Activated CD4-positive, alpha-beta T cell treated with anti-CD3 and anti-CD28 coated beads for 36 hours (primary cell): ENCODE measurements at regions of chr2 and their contacts with region 1.

Region 1: GRCh38 chr2:24075915-24076848 is at the start of gene SF3B6:
- DNase-seq: peak; percentile 100
- ATAC-seq: peak; percentile 91
- H3K4me3 Mint-ChIP-seq: peak within 1 kb of the TSS; percentile 99
- H3K27ac Mint-ChIP-seq: peak within 1 kb of the TSS; percentile 99
- H3K4me1 Mint-ChIP-seq: peaks cover 43% of the 10 kb centered on the region
- H3K27me3 Mint-ChIP-seq: no peaks in the 10 kb centered on the region
- total RNA-seq, gene SF3B6: 128 to 143 TPM

Region 2: DNA sequence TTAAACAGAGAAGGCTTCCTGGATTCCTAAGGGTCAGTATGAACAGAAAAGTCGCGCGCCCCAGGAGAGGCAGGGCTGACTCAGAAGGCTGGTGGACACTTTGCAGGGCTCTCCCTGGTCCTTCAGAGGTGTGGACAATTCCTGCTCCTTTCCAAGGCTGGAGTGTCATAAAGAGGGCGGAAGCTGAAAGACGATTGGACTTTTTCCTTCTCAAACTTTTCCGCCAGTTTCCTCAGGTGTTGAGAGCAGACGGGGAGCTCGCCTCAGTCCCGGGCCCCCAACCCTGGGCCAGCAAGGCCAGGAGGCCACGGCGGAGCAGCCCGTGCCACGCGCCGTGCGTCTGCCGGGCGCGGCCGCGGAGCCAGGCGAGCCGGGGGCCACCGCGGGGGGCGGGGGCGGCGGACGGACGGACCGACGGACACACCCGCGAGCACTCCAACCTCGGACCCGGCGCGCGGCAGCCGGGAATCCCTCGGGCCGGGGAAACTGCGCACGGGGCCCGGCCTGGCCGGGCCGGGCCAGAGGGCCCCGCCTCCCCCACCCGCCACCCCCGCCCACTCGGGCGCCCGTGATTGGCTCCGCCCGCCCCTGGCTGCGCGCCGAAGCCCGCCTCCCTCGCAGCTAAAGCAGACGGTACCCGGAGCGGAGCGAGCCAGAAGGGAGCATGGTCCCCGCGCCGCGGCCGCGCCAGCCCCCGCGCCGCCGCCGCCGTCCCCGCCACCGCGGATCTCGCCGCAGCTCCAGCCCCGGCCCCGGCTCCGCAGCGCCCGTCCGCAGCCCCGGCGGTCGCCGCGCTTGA is 691.4 kb before region 1 on chr2 and contains the start of gene KLHL29:
- CTCF ChIA-PET with region 1: no interaction called
- POLR2A ChIA-PET with region 1: no interaction called
- intact Hi-C with region 1: loop called in 1 of 2 experiments (anchors 10 kb)
- DNase-seq: peak; percentile 83
- ATAC-seq: peak; percentile 71
- H3K4me3 Mint-ChIP-seq: peak within 1 kb of the TSS; percentile 76
- H3K27ac Mint-ChIP-seq: peak within 1 kb of the TSS; percentile 34
- H3K4me1 Mint-ChIP-seq: peaks cover 25% of the 10 kb centered on the region
- H3K27me3 Mint-ChIP-seq: peaks cover 54% of the 10 kb centered on the region
- total RNA-seq, gene KLHL29: 1.7 to 2.0 TPM

Region 3: DNA sequence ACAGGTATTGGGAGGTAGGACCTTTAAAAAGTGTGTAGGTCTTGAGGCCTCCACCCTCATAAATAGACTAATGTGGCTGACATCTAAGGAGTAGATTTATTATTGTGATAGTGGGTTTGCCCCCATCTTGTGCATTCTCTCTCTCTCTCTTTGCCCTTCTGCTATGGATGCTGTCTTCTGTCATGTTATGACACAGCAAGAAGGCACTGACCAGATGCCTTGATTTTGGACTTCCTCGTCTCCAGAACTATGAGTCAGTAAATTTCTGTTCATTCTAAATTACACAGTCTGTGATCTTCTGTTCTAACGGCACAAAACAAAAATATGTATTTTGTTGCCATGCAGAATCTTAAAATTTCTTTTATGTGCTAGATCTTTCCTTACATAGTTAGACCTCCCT is 216.2 kb before region 1 on chr2:
- CTCF ChIA-PET with region 1: no interaction called
- POLR2A ChIA-PET with region 1: no interaction called
- intact Hi-C with region 1: no loop called
- DNase-seq: no peak
- ATAC-seq: no peak
- H3K4me3 Mint-ChIP-seq: no peak overlapping the region
- H3K27ac Mint-ChIP-seq: no peak overlapping the region
- H3K4me1 Mint-ChIP-seq: no peaks in the 10 kb centered on the region
- H3K27me3 Mint-ChIP-seq: no peaks in the 10 kb centered on the region

Region 4: DNA sequence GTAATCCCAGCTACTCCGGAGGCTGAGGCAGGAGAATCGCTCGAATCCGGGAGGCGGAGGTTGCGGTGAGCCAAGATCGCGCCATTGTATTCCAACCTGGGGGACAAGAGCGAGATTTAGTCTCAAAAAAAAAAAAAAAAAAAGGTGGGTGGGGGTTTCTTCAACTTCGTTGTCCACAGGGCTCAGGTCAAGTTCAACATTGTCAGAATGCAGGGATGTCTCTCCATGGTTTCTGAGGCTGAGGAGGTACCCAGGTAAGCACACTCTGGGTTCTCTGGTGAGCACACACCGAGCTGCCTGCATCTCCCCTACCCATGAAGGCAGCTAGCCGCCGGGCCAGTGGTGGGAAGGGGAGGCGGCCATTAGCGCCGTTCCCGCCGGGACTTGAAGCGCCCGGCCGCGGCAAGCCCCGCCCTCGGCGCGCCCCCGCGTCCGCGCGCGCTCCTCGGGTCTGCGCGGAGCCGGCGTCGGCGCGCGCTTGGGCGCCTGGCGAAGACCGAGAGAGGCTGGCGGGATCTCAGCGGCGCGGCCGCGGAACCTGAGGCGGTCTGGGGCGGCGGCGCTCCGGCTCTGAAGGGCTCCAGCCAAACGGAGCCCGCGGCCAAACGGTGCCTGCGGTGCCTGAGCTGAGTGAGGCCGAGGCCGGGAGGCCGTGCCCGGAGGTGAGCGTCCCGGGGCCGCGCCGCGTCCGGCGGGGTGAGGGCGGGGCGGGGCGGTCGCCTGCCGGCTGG is 136.0 kb before region 1 on chr2 and contains the start of gene UBXN2A:
- CTCF ChIA-PET with region 1: no interaction called
- POLR2A ChIA-PET with region 1: interaction called, 5 read pairs
- intact Hi-C with region 1: loop called (anchors 1 to 2 kb)
- DNase-seq: peak; percentile 85
- ATAC-seq: peak; percentile 88
- H3K4me3 Mint-ChIP-seq: peak within 1 kb of the TSS; percentile 84
- H3K27ac Mint-ChIP-seq: peak within 1 kb of the TSS; percentile 93
- H3K4me1 Mint-ChIP-seq: peaks cover 18% of the 10 kb centered on the region
- H3K27me3 Mint-ChIP-seq: peaks cover 5% of the 10 kb centered on the region
- total RNA-seq, gene UBXN2A: 9.1 to 10.5 TPM

Region 5: DNA sequence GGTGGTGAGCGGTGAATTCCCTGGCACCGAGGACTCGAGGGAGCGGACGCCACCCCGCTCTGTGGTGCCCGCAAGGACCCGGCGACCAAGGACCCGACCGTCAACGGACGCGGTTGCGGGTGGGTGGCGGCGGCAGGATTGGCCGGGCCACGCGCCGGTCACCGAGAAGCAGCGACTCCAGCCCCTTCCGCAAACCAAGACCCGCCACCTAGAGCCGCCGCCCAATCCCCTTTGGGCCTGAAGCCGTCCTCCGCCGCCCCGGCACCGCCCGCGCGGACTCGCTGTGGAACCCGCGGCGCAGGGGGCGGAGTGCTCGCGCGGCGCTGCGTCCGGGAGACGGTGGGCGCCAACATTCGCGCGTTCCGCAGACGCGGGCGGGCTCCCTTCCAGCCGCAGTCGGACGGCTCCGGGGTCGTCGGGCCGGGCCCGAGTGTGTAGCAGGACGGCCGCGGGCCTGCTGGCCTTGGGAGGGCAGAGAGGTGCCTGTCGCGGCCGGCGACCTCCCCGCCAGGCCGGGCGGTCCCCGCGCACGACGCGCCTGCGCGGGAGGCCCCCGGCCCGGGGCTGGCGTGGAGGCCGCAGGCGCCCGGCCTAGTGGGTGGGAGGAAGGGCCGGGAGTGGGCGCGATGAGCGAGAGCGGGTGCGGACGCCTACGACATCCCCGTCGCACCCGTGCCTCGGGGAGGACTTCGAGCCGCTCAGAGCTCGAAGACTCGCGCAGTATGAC is 47.2 kb after region 1 on chr2 and contains the starts of genes FAM228B and PFN4:
- CTCF ChIA-PET with region 1: no interaction called
- POLR2A ChIA-PET with region 1: no interaction called
- intact Hi-C with region 1: loop called in 1 of 2 experiments (anchors 1 kb)
- DNase-seq: peak; percentile 79
- ATAC-seq: peak; percentile 89
- H3K4me3 Mint-ChIP-seq: peak within 1 kb of the TSS; percentile 75
- H3K27ac Mint-ChIP-seq: peak within 1 kb of the TSS; percentile 78
- H3K4me1 Mint-ChIP-seq: peaks cover 9% of the 10 kb centered on the region
- H3K27me3 Mint-ChIP-seq: no peaks in the 10 kb centered on the region
- total RNA-seq, gene FAM228B: 5.2 to 10.5 TPM
- total RNA-seq, gene PFN4: 0.30 TPM in 1 of 2 experiments, not detected in the other

Region 6: DNA sequence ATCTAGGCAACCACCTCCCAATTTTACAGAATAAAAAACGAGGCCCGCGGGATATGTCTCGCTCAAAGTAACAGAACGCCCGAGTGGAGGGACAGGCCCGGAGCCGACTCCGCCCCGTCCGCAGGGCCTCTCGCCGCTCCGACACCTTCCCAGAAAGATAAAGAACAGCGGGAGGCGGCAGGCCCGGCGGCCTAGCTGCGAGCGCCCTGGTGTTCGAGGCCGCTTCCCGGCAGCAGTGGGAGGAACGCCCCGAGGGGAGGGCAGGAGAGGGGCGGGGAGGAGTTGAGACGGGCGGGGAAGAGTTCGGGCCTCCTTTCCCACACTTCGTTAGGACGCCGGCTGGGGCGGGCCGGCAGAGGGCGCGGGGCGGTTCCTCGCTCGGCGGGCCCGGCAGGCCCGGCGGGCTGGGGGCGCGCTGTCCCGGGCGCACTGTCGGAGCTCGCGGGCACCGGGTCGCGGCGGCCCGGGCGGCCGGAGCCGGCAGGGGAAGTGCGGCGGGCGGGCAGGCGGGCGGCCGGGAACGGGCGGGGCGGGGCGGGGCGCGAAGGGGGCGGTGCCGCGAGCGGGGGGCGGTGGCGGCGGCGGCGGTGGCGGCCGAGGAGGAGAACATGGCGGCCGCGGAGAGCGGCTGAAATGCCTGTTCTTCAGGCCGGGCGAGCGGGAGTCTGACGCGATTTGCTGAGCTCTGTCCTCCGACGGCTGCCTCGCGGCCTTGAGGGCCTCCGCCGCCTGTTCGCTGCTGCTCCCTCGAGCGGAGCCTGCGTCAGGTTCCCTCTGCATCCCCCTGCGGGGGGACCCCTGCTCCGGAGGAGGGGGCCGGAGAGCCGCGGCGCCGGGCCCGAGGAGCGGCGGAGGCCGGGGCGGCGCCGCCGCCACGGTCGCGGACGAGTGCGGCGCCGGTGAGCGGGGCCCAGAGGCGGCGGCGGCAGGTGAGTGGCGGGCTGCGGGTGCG is 414.8 kb after region 1 on chr2 and contains the start of gene NCOA1:
- CTCF ChIA-PET with region 1: no interaction called
- POLR2A ChIA-PET with region 1: no interaction called
- intact Hi-C with region 1: loop called in 1 of 2 experiments (anchors 2 kb)
- DNase-seq: peak; percentile 96
- ATAC-seq: peak; percentile 89
- H3K4me3 Mint-ChIP-seq: peak within 1 kb of the TSS; percentile 85
- H3K27ac Mint-ChIP-seq: peak within 1 kb of the TSS; percentile 95
- H3K4me1 Mint-ChIP-seq: peaks cover 46% of the 10 kb centered on the region
- H3K27me3 Mint-ChIP-seq: no peaks in the 10 kb centered on the region
- total RNA-seq, gene NCOA1: 20.6 to 29.3 TPM